Activated naive CD4-positive, alpha-beta T cell treated with anti-CD3 and anti-CD28 coated beads, Interleukin-2, amount 10 ng/mL, durations not matched to agents 7 days and 5 days (primary cell): ENCODE measurements at regions of chr14 and their contacts with region 1.

Region 1: GRCh38 chr14:101235335-101236103 is 325.8 kb upstream of the DIO3 start:
- DNase-seq: peak; percentile 44
- H3K4me3 Mint-ChIP-seq: no peak overlapping the region
- H3K27ac Mint-ChIP-seq: no peak overlapping the region
- H3K4me1 Mint-ChIP-seq: no peaks in the 10 kb centered on the region
- H3K27me3 Mint-ChIP-seq: peaks cover 4% of the 10 kb centered on the region

Region 2: DNA sequence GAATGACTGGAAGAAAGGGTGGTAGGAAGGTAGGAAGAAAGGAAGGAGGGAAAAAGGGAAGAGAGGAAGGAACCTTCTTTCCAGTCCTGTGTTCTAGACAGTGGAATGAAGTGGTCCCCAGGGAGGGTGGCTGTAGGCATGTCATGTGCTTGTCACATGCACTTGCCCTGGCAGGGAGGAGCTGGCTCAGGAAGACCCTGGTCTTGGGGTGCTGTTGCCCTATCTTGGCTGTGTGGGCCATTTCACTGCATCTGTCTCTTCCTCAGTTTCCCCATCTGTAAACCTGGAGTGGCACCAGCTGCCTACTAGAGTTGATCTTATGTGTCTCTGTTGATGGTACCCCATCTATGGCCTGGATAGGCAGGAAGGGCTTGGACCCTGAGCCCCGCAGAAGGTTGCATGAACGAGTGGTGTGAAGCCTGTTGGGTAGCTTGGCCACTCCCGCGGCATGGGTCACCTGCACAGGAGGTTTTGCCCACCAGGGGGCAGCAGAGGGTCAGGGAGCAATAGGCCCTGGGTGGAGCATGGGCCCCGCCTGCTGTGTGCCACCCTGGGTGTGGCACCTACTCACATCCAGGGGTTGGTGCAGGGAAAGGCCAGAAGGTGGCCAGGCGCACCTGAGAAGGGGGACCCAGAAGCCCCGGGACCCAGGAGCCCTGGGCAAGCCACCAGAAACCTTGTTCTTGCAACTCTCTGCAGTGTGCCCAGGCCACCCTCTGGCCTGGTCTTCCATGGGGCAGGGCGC is 384.5 kb before region 1 on chr14:
- CTCF ChIA-PET with region 1: interaction called, 11 read pairs
- DNase-seq: peak; percentile 83
- H3K4me3 Mint-ChIP-seq: no peak overlapping the region
- H3K27ac Mint-ChIP-seq: no peak overlapping the region
- H3K4me1 Mint-ChIP-seq: peaks cover 4% of the 10 kb centered on the region
- H3K27me3 Mint-ChIP-seq: no peaks in the 10 kb centered on the region